T-cell (primary cell): ENCODE measurements at regions of chr6 and their contacts with region 1.

Region 1: DNA sequence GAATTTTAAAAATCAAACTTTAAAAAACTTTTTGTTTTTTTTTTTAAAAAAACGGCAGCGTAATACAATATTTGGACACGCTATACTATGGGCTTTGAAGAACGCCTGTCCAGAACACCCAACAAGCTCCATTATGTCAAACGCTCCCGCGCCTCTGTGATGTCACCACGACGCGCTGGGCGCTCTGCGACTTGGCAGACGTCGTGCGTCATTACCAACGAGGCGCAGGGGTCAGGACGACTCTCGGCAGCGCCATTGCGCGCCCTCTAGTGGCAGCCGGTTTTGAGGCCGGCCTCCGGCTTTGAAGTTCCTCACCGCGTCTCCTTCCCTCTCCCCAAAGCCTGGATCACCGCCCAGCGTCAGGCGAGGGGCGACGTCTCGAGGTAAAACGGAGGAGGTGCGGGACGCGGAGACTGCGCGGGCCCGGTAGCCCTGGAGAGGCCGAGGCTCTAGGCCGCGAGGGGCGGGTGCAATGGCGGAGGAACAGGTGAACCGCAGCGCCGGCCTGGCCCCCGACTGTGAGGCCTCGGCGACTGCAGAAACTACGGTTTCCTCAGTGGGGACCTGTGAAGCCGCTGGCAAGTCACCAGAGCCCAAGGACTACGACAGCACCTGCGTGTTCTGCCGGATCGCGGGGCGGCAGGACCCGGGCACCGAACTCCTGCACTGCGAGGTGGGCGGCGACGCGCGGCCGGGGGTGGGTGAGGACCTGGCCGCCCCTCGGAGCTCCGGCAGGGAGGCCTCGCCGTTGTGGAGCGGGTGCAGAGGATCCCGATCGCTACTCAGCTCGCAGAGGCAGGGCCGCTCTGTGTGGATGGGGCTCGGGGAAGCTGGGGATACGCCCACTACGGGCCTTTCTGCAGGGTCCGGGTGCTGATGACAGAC is at the start of gene HINT3:
- DNase-seq: peak; percentile 93 to 99 (median 97)
- ATAC-seq: peak; percentile 88 to 94 (median 91)
- H3K4me3 ChIP-seq: peak within 1 kb of the TSS; percentile 61 to 92
- H3K4me3 Mint-ChIP-seq: peak within 1 kb of the TSS in 1 of 3 donors; percentile 60
- H3K27ac ChIP-seq: peak within 1 kb of the TSS; percentile 98
- H3K27ac Mint-ChIP-seq: peak within 1 kb of the TSS in 1 of 2 donors; percentile 86
- H3K4me1 ChIP-seq: peaks cover 8 to 18% of the 10 kb centered on the region in 2 experiments
- H3K4me1 Mint-ChIP-seq: peaks cover 0 to 19% (median 14%) of the 10 kb centered on the region in 3 donors
- H3K27me3 ChIP-seq: peaks cover 0 to 3% of the 10 kb centered on the region in 2 experiments
- H3K27me3 Mint-ChIP-seq: peaks cover 0 to 6% of the 10 kb centered on the region in 2 donors
- total RNA-seq, gene HINT3: 8.5 to 11.7 (median 10.5) TPM

Region 2: DNA sequence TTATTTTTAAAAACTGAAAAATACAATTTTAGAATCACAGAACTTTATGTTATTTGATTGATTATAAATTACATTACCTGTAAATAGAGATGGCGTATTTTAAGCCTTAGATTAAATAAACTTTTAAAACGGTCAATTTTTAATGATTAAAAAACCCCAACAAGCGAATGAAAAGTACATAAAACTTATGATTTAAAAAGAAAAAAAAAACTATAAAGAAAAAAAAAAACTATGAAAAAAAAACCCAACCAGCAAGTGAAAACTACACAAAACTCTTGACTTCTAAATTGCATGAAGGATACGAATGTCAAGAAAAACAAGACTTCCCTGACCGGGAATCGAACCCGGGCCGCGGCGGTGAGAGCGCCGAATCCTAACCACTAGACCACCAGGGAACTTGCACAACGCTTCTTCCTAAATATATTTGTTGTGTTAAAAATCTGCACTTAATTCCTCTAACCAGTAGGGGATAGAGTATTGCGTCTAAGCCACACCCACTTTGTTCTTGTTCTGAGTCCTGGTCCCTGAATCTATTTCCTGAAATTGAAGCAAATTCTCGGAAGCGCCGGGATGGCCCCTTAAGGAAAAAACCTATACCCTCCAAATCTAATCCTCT is 176.7 kb before region 1 on chr6:
- CTCF ChIA-PET with region 1: interaction called, 4 to 29 read pairs
- POLR2A ChIA-PET with region 1: interaction called in 1 of 2 experiments, 4 read pairs
- DNase-seq: peak; percentile 68 to 92 (median 83)
- ATAC-seq: peak; percentile 77 to 81 (median 78)
- H3K4me3 ChIP-seq: peak overlapping the region; percentile 70 to 84
- H3K4me3 Mint-ChIP-seq: no peak overlapping the region
- H3K27ac ChIP-seq: peak overlapping the region; percentile 93
- H3K27ac Mint-ChIP-seq: no peak overlapping the region
- H3K4me1 ChIP-seq: peaks cover 3 to 10% of the 10 kb centered on the region in 2 experiments
- H3K4me1 Mint-ChIP-seq: peaks cover 15 to 25% (median 17%) of the 10 kb centered on the region in 3 donors
- H3K27me3 ChIP-seq: no peaks in the 10 kb centered on the region
- H3K27me3 Mint-ChIP-seq: peaks cover 0 to 2% of the 10 kb centered on the region in 2 donors

Region 3: GRCh38 chr6:125906158-125906998 is 50.4 kb before region 1 on chr6:
- CTCF ChIA-PET with region 1: interaction called, 6 to 14 read pairs
- POLR2A ChIA-PET with region 1: no interaction called
- DNase-seq: peak in 26 of 35 experiments; percentile 5 to 66 (median 33)
- ATAC-seq: peak in 3 of 4 experiments; percentile 51 to 68 (median 57)
- H3K4me3 ChIP-seq: no peak overlapping the region
- H3K4me3 Mint-ChIP-seq: no peak overlapping the region
- H3K27ac ChIP-seq: no peak overlapping the region
- H3K27ac Mint-ChIP-seq: peak overlapping the region in 1 of 2 donors; percentile 8
- H3K4me1 ChIP-seq: peaks cover 0 to 6% of the 10 kb centered on the region in 2 experiments
- H3K4me1 Mint-ChIP-seq: peaks cover 0 to 29% (median 9%) of the 10 kb centered on the region in 3 donors
- H3K27me3 ChIP-seq: no peaks in the 10 kb centered on the region
- H3K27me3 Mint-ChIP-seq: no peaks in the 10 kb centered on the region

Region 4: GRCh38 chr6:125918681-125919566 is 37.8 kb before region 1 on chr6:
- CTCF ChIA-PET with region 1: interaction called, 3 to 13 read pairs
- POLR2A ChIA-PET with region 1: interaction called in 1 of 2 experiments, 4 read pairs
- DNase-seq: peak in 28 of 35 experiments; percentile 5 to 79 (median 30)
- ATAC-seq: peak; percentile 73 to 98 (median 84)
- H3K4me3 ChIP-seq: no peak overlapping the region
- H3K4me3 Mint-ChIP-seq: peak overlapping the region; percentile 58 to 68 (median 62)
- H3K27ac ChIP-seq: peak overlapping the region; percentile 82
- H3K27ac Mint-ChIP-seq: peak overlapping the region; percentile 77 to 86
- H3K4me1 ChIP-seq: peaks cover 6 to 11% of the 10 kb centered on the region in 2 experiments
- H3K4me1 Mint-ChIP-seq: peaks cover 22 to 34% (median 24%) of the 10 kb centered on the region in 3 donors
- H3K27me3 ChIP-seq: no peaks in the 10 kb centered on the region
- H3K27me3 Mint-ChIP-seq: no peaks in the 10 kb centered on the region

Region 5: GRCh38 chr6:125944434-125944816 is 12.3 kb before region 1 on chr6:
- CTCF ChIA-PET with region 1: interaction called in 1 of 2 experiments, 8 read pairs
- POLR2A ChIA-PET with region 1: interaction called in 1 of 2 experiments, 11 read pairs
- DNase-seq: no peak
- ATAC-seq: no peak
- H3K4me3 ChIP-seq: no peak overlapping the region
- H3K4me3 Mint-ChIP-seq: no peak overlapping the region
- H3K27ac ChIP-seq: no peak overlapping the region
- H3K27ac Mint-ChIP-seq: no peak overlapping the region
- H3K4me1 ChIP-seq: no peaks in the 10 kb centered on the region
- H3K4me1 Mint-ChIP-seq: peaks cover 0 to 6% (median 3%) of the 10 kb centered on the region in 3 donors
- H3K27me3 ChIP-seq: no peaks in the 10 kb centered on the region
- H3K27me3 Mint-ChIP-seq: peaks cover 7 to 13% of the 10 kb centered on the region in 2 donors

Region 6: GRCh38 chr6:125986300-125987025 is 29.7 kb after region 1 on chr6 and contains the start of gene TRMT11:
- CTCF ChIA-PET with region 1: interaction called, 4 to 28 read pairs
- POLR2A ChIA-PET with region 1: interaction called, 3 to 7 read pairs
- DNase-seq: peak; percentile 58 to 88 (median 75)
- ATAC-seq: peak; percentile 94 to 97 (median 96)
- H3K4me3 ChIP-seq: peak within 1 kb of the TSS; percentile 79 to 96
- H3K4me3 Mint-ChIP-seq: peak within 1 kb of the TSS in 2 of 3 donors; percentile 25 to 42
- H3K27ac ChIP-seq: peak within 1 kb of the TSS; percentile 91
- H3K27ac Mint-ChIP-seq: peak within 1 kb of the TSS in 1 of 2 donors; percentile 35
- H3K4me1 ChIP-seq: peaks cover 5 to 9% of the 10 kb centered on the region in 2 experiments
- H3K4me1 Mint-ChIP-seq: peaks cover 6 to 23% (median 22%) of the 10 kb centered on the region in 3 donors
- H3K27me3 ChIP-seq: no peaks in the 10 kb centered on the region
- H3K27me3 Mint-ChIP-seq: no peaks in the 10 kb centered on the region
- total RNA-seq, gene TRMT11: 14.2 to 30.3 (median 21.6) TPM